ENCODE measurements at regions of chr2 and their contacts with region 1.

Region 1: GRCh38 chr2:192298664-192299063 is 103.9 kb upstream of the TMEFF2 start:
- DNase-seq: no peak
- H3K4me3 ChIP-seq: no peak overlapping the region
- H3K27ac ChIP-seq: no peak overlapping the region
- H3K4me1 ChIP-seq: no peaks in the 10 kb centered on the region
- H3K27me3 ChIP-seq: no peaks in the 10 kb centered on the region
- CTCF ChIP-seq: no peak
- EP300 ChIP-seq: no peak
- POLR2A ChIP-seq: no peak

Region 2: DNA sequence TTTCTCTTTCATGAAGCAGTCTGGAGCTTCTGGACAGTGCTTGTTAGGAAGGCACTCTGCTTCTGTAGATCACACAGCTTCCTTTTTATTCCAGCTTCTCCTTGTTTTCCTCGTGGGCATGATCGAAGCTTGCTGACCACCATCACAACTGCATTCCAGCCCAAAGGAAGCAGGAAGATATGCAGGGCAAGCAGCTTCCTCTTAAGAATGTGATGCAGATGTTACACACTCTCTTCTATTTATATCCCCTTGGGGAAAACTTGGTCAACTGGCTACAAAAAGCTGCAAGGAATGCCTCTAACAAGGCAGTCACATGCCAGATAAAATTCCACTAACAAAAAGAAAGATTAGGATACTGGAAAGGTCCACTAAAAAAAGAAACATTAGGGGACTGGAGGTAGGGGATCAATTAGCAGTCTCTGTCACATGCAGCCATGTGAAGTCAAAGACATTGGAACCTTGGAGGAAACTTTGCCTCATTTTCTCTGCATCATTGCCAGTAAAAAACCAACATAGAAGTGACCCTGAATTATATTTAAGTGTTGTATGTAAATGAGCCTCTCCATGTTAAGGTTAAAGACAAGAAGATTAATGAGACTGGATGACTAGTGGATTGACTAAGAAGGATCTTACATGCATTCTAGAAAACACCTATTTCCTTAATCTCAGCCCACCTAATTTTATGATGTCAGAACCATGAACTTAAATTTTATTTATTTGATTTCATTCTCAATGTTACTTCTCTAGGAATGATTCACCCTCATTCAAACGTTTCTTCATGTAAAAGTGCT is 1551.5 kb before region 1 on chr2:
- intact Hi-C with region 1: loop called (anchors 10 kb)
- DNase-seq: no peak
- H3K4me3 ChIP-seq: no peak overlapping the region
- H3K27ac ChIP-seq: no peak overlapping the region
- H3K4me1 ChIP-seq: no peaks in the 10 kb centered on the region
- H3K27me3 ChIP-seq: no peaks in the 10 kb centered on the region
- CTCF ChIP-seq: no peak
- EP300 ChIP-seq: no peak
- POLR2A ChIP-seq: no peak

Region 3: DNA sequence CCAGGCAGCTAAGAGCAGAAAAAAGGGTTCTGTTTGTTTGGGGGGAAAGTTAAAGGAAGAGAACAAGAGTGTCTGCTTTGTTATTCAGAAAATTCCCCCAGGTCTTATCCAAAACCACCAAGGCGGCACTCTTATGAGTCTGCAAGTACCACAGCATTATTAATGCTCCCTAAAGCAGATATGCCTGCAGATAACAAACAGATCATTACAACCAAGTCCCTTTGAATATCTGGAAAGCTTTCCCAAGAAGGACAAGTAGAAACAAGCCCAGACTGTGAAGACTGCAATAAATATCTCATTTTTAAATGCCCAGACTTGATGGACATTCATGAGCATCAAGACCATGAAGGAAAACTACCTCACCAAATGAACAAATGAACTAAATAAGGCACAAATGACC is 174.7 kb after region 1 on chr2:
- intact Hi-C with region 1: no loop called
- DNase-seq: no peak
- H3K4me3 ChIP-seq: no peak overlapping the region
- H3K27ac ChIP-seq: no peak overlapping the region
- H3K4me1 ChIP-seq: no peaks in the 10 kb centered on the region
- H3K27me3 ChIP-seq: no peaks in the 10 kb centered on the region
- CTCF ChIP-seq: no peak
- EP300 ChIP-seq: no peak
- POLR2A ChIP-seq: no peak

Region 4: DNA sequence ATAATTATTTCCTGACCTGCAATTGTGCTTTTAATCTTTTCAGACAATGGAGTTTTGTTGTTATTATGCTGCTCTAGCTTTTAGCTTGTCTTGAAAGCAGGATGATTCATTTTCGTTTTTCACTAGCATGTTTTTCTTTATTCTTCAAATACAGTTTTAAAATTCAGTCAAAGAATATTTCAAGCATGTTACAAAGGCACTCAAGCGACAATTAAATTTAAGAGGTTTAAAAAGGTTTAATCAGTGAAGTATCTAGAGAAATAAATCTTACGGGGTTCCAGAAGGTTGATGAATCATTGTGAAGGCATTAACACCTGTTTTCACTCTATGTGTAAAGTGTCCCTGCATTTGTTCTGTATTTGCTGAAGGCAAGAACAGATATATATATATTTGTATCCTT is 286.8 kb after region 1 on chr2:
- intact Hi-C with region 1: no loop called
- DNase-seq: no peak
- H3K4me3 ChIP-seq: no peak overlapping the region
- H3K27ac ChIP-seq: no peak overlapping the region
- H3K4me1 ChIP-seq: no peaks in the 10 kb centered on the region
- H3K27me3 ChIP-seq: no peaks in the 10 kb centered on the region
- CTCF ChIP-seq: no peak
- EP300 ChIP-seq: no peak
- POLR2A ChIP-seq: no peak

Measured in sigmoid colon (tissue), 7 donors.